SK-N-SH (cell line): ENCODE measurements at regions of chr4 and their contacts with region 1.

Region 1: GRCh38 chr4:186021461-186022167 is 47.3 kb upstream of the TLR3 start:
- DNase-seq: peak; percentile 82
- H3K4me3 ChIP-seq: peak overlapping the region; percentile 9 to 42; a peak in 2 of 4 replicates
- H3K27ac ChIP-seq: peak overlapping the region in 1 of 2 experiments; percentile 80; a peak in 2 of 4 replicates
- H3K4me1 ChIP-seq: peaks cover 0 to 17% of the 10 kb centered on the region in 2 experiments; a peak in 2 of 4 replicates
- H3K27me3 ChIP-seq: no peaks in the 10 kb centered on the region
- CTCF ChIP-seq: peak; percentile 92
- EP300 ChIP-seq: peak in 1 of 2 experiments; percentile 7; a peak in 1 of 4 replicates
- RAD21 ChIP-seq: peak; percentile 98

Region 2: GRCh38 chr4:185624259-185624589 is 397.4 kb before region 1 on chr4:
- CTCF ChIA-PET with region 1: interaction called, 12 read pairs
- POLR2A ChIA-PET with region 1: no interaction called
- DNase-seq: no peak
- H3K4me3 ChIP-seq: no peak overlapping the region
- H3K27ac ChIP-seq: no peak overlapping the region
- H3K4me1 ChIP-seq: peaks cover 0 to 5% of the 10 kb centered on the region in 2 experiments; a peak in 1 of 4 replicates
- H3K27me3 ChIP-seq: no peaks in the 10 kb centered on the region
- CTCF ChIP-seq: no peak
- EP300 ChIP-seq: no peak
- RAD21 ChIP-seq: no peak

Region 3: GRCh38 chr4:185640811-185641675 is 380.6 kb before region 1 on chr4:
- CTCF ChIA-PET with region 1: interaction called, 128 read pairs
- POLR2A ChIA-PET with region 1: interaction called, 7 read pairs
- DNase-seq: peak; percentile 50
- H3K4me3 ChIP-seq: no peak overlapping the region
- H3K27ac ChIP-seq: peak overlapping the region in 1 of 2 experiments; percentile 53; a peak in 2 of 4 replicates
- H3K4me1 ChIP-seq: peaks cover 0 to 25% of the 10 kb centered on the region in 2 experiments; a peak in 2 of 4 replicates
- H3K27me3 ChIP-seq: no peaks in the 10 kb centered on the region
- CTCF ChIP-seq: peak; percentile 72
- EP300 ChIP-seq: no peak
- RAD21 ChIP-seq: peak; percentile 75

Region 4: DNA sequence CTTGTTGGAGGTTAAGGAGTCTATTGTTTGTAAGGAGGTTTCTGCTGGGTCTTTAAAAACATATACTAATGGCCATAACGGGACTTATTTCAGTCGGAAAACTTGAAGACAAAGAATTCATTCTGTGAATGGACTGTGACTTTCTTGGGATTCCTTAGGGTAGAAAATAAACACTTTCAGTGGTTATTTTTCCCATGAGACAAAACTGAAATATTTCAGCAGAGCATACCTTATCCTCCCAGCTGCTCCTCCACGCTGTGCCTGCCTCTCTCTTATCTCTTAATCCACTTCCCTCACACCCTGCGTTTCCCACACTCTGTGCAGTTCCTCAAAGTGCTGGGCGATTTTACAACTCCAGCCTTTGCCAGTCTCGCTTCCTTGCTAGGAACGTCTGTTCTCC is 162.5 kb before region 1 on chr4:
- CTCF ChIA-PET with region 1: interaction called, 12 read pairs
- POLR2A ChIA-PET with region 1: no interaction called
- DNase-seq: no peak
- H3K4me3 ChIP-seq: no peak overlapping the region
- H3K27ac ChIP-seq: no peak overlapping the region
- H3K4me1 ChIP-seq: no peaks in the 10 kb centered on the region; a peak in 2 of 4 replicates
- H3K27me3 ChIP-seq: no peaks in the 10 kb centered on the region
- CTCF ChIP-seq: no peak
- EP300 ChIP-seq: no peak
- RAD21 ChIP-seq: no peak

Region 5: DNA sequence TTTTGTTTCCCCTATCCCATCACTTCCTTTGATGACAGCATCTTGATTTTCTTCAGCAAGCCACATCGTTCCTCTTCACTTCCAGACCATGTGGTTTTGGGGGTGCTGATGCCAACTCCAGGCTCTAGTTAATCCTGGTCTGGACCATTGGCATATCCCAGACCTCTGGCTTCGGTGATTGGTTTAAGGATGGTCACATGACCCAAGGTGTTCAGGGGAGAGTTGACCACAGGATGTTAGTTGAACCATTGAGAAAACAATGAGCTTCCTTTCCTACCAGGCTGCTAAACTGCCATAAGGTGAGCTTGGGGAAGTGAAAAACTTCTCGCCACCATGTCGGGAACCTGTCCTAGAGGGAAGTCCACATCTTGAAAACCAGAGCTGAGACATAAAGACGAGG is 13.6 kb before region 1 on chr4:
- CTCF ChIA-PET with region 1: interaction called, 16 read pairs
- POLR2A ChIA-PET with region 1: no interaction called
- DNase-seq: no peak
- H3K4me3 ChIP-seq: no peak overlapping the region
- H3K27ac ChIP-seq: no peak overlapping the region
- H3K4me1 ChIP-seq: no peaks in the 10 kb centered on the region; a peak in 1 of 4 replicates
- H3K27me3 ChIP-seq: no peaks in the 10 kb centered on the region
- CTCF ChIP-seq: no peak
- EP300 ChIP-seq: no peak
- RAD21 ChIP-seq: no peak

Region 6: GRCh38 chr4:186105647-186106321 is 84.2 kb after region 1 on chr4:
- CTCF ChIA-PET with region 1: no interaction called
- POLR2A ChIA-PET with region 1: no interaction called
- DNase-seq: peak; percentile 36
- H3K4me3 ChIP-seq: no peak overlapping the region
- H3K27ac ChIP-seq: no peak overlapping the region
- H3K4me1 ChIP-seq: no peaks in the 10 kb centered on the region; a peak in 1 of 4 replicates
- H3K27me3 ChIP-seq: peaks cover 26% of the 10 kb centered on the region; the same call in 1 of the 2 replicates
- CTCF ChIP-seq: no peak
- EP300 ChIP-seq: no peak
- RAD21 ChIP-seq: no peak